ENCODE measurements at regions of chr13 and their contacts with region 1.

Region 1: DNA sequence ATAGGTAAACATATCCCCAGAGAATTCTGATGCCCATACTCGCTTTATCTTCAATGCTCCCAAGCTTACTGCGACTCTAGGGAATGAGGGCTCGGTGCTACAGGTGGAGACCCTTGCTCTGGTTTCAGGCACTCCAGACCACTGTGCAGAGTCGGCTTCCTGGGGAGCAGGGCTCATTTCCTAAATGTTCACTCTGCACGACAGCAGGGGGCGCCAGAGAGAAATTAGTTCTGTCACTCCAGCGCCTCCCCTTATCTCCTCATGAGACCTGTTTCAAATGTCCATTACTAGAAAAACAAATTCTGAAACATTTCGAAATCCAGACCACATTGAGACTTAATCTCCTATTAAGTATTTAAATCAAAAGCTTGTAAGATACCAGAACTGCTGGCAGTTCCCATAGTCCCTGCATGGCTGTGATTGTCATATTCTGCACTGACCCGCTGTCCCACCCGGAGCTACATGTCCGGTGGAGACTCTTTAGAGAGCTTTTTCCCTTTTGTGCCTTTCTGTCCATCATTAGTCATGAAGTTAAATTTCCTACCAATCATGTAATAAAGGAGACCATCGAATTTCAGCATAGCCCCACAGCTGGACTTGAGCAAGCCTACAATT is 22.4 kb downstream of the EPSTI1 start:
- DNase-seq: peak; percentile 73 to 77 (median 75)
- H3K4me3 ChIP-seq: no peak overlapping the region
- H3K4me3 Mint-ChIP-seq: peak overlapping the region in 1 of 8 donors; percentile 34
- H3K27ac ChIP-seq: no peak overlapping the region
- H3K27ac Mint-ChIP-seq: peak overlapping the region in 5 of 7 donors; percentile 0 to 77 (median 16)
- H3K4me1 ChIP-seq: peaks cover 26% of the 10 kb centered on the region
- H3K4me1 Mint-ChIP-seq: peaks cover 15 to 28% (median 21%) of the 10 kb centered on the region in 4 donors
- H3K27me3 ChIP-seq: no peaks in the 10 kb centered on the region
- H3K27me3 Mint-ChIP-seq: no peaks in the 10 kb centered on the region

Region 2: GRCh38 chr13:42569576-42570344 is 399.9 kb before region 1 on chr13:
- CTCF ChIA-PET with region 1: no interaction called
- POLR2A ChIA-PET with region 1: no interaction called
- intact Hi-C with region 1: no loop called
- DNase-seq: no peak
- H3K4me3 ChIP-seq: no peak overlapping the region
- H3K4me3 Mint-ChIP-seq: no peak overlapping the region
- H3K27ac ChIP-seq: no peak overlapping the region
- H3K27ac Mint-ChIP-seq: no peak overlapping the region
- H3K4me1 ChIP-seq: no peaks in the 10 kb centered on the region
- H3K4me1 Mint-ChIP-seq: peaks cover 1 to 11% (median 4%) of the 10 kb centered on the region in 4 donors
- H3K27me3 ChIP-seq: no peaks in the 10 kb centered on the region
- H3K27me3 Mint-ChIP-seq: no peaks in the 10 kb centered on the region

Region 3: GRCh38 chr13:42985312-42986175 is 15.9 kb after region 1 on chr13:
- CTCF ChIA-PET with region 1: interaction called, 39 read pairs
- POLR2A ChIA-PET with region 1: interaction called, 23 read pairs
- intact Hi-C with region 1: no loop called
- DNase-seq: no peak
- H3K4me3 ChIP-seq: no peak overlapping the region
- H3K4me3 Mint-ChIP-seq: no peak overlapping the region
- H3K27ac ChIP-seq: no peak overlapping the region
- H3K27ac Mint-ChIP-seq: no peak overlapping the region
- H3K4me1 ChIP-seq: peaks cover 43% of the 10 kb centered on the region
- H3K4me1 Mint-ChIP-seq: peaks cover 40 to 52% (median 50%) of the 10 kb centered on the region in 4 donors
- H3K27me3 ChIP-seq: no peaks in the 10 kb centered on the region
- H3K27me3 Mint-ChIP-seq: no peaks in the 10 kb centered on the region

Region 4: DNA sequence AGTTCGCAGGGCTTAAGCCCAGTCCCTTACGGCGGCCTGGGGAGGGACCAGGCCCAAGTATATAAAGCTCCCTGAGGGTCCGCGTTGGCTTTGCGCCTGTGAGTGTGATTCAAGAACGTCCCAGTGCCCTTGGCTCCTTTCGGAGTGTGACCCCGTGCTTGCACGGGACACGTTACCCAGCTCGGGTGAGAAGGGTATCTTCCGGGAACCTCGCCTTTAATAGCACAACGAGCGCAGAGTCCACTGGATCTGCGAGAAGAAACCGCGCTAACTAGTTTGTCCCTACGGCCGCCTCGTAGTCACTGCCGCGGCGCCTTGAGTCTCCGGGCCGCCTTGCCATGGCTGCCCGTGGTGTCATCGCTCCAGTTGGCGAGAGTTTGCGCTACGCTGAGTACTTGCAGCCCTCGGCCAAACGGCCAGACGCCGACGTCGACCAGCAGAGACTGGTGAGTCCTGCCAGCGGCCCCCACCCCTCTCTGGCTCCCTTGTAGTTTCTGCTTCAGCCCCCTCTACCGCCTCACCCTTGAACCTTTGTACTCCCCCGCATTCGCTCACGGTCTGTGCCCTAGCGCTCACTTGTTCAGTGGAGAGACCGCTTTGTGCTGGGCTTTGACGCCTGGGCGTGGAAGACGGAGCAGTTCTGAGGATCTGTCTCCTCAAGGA is 53.8 kb after region 1 on chr13 and contains the start of gene DNAJC15:
- CTCF ChIA-PET with region 1: interaction called, 25 read pairs
- POLR2A ChIA-PET with region 1: interaction called, 4 read pairs
- intact Hi-C with region 1: loop called (anchors 1 kb)
- DNase-seq: peak; percentile 81 to 87 (median 84)
- H3K4me3 ChIP-seq: peak within 1 kb of the TSS; percentile 85 to 92
- H3K4me3 Mint-ChIP-seq: peak within 1 kb of the TSS; percentile 90 to 100 (median 98)
- H3K27ac ChIP-seq: peak within 1 kb of the TSS; percentile 66
- H3K27ac Mint-ChIP-seq: peak within 1 kb of the TSS; percentile 87 to 99 (median 98)
- H3K4me1 ChIP-seq: peaks cover 35% of the 10 kb centered on the region
- H3K4me1 Mint-ChIP-seq: peaks cover 19 to 42% (median 32%) of the 10 kb centered on the region in 4 donors
- H3K27me3 ChIP-seq: no peaks in the 10 kb centered on the region
- H3K27me3 Mint-ChIP-seq: no peaks in the 10 kb centered on the region
- total RNA-seq, gene DNAJC15: 9.7 to 11.1 TPM

Region 5: GRCh38 chr13:43085545-43085944 is 115.9 kb after region 1 on chr13:
- CTCF ChIA-PET with region 1: interaction called, 13 read pairs
- POLR2A ChIA-PET with region 1: no interaction called
- intact Hi-C with region 1: loop called (anchors 2 kb)
- DNase-seq: peak in 3 of 5 donors; percentile 6 to 23 (median 22)
- H3K4me3 ChIP-seq: no peak overlapping the region
- H3K4me3 Mint-ChIP-seq: no peak overlapping the region
- H3K27ac ChIP-seq: no peak overlapping the region
- H3K27ac Mint-ChIP-seq: no peak overlapping the region
- H3K4me1 ChIP-seq: no peaks in the 10 kb centered on the region
- H3K4me1 Mint-ChIP-seq: peaks cover 0 to 18% (median 7%) of the 10 kb centered on the region in 4 donors
- H3K27me3 ChIP-seq: no peaks in the 10 kb centered on the region
- H3K27me3 Mint-ChIP-seq: no peaks in the 10 kb centered on the region

Region 6: GRCh38 chr13:43804461-43805070 is 834.9 kb after region 1 on chr13:
- CTCF ChIA-PET with region 1: interaction called, 26 read pairs
- POLR2A ChIA-PET with region 1: no interaction called
- intact Hi-C with region 1: loop called (anchors 1 kb)
- DNase-seq: peak in 4 of 5 donors; percentile 33 to 42 (median 38)
- H3K4me3 ChIP-seq: no peak overlapping the region
- H3K4me3 Mint-ChIP-seq: no peak overlapping the region
- H3K27ac ChIP-seq: no peak overlapping the region
- H3K27ac Mint-ChIP-seq: no peak overlapping the region
- H3K4me1 ChIP-seq: no peaks in the 10 kb centered on the region
- H3K4me1 Mint-ChIP-seq: peaks cover 0 to 3% (median 0%) of the 10 kb centered on the region in 4 donors
- H3K27me3 ChIP-seq: no peaks in the 10 kb centered on the region
- H3K27me3 Mint-ChIP-seq: peaks cover 3 to 8% of the 10 kb centered on the region in 2 donors